Activated CD4-positive, alpha-beta memory T cell treated with anti-CD3 and anti-CD28 coated beads for 36 hours (primary cell): ENCODE measurements at regions of chr5 and their contacts with region 1.

Region 1: DNA sequence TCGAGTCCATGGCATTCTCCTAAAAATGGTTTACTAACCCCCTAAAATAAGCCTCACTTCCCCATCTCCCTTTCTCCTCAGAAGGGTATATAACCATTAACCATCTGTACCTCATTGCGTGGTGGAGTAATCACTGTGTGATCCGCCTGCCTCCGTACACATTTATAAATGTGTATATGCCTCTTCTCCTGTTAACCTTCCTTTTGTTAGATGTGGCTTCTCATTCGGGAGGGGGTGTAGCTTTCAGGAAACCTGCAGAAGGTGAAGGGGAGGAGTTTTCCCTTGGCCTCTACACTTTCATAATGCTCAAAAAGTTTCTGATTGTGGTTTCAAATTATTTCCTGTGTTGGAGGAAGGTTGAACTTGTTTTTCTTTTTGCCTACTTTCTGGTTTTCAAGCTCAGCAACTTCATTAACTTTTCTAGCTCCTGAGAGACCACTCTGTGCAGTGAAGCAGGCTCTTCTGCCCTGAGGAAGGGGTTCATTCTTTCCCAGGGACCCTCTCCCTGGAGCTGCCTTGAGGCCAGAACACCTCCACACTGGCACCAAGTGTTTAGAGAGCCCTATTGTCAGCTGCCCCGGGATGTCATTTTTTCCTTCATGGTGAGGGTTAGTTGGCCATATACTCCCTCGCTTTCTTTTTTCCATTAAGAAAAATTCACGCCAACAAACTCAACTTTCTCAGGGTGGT is 46.9 kb downstream of the RASGRF2 start:
- DNase-seq: peak; percentile 66
- H3K4me3 Mint-ChIP-seq: peak overlapping the region; percentile 76
- H3K27ac Mint-ChIP-seq: peak overlapping the region; percentile 96
- H3K4me1 Mint-ChIP-seq: peaks cover 69% of the 10 kb centered on the region
- H3K27me3 Mint-ChIP-seq: no peaks in the 10 kb centered on the region

Region 2: DNA sequence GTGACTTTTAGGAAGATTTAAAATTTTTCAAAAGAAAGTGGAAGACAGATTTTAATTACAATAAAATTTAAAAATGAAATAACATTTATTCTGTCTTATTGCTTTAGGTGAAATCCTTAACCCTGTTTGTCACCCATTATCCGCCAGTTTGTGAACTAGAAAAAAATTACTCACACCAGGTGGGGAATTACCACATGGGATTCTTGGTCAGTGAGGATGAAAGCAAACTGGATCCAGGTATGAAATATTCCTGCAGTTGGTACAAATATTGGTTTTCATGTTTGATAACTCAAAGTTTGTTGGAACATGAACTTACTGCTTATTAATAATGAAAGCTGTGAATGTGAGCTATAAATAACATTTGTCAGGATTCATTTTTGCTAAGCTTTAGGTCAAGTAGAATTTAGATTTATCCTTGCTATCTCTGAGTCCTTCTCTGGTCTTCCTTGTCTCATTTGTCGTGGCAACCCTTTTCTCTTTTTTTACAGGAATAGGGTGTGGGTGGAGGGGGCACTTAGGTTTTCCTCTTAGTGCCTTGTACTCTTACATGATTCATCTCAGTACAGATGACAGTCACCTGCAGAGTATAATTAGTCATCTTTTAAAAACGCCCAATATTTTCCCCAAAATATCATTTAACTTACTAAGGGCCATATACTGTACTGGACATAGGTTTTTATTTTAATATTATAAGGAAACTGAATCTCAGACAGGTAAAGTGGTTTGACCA is 142.2 kb before region 1 on chr5:
- CTCF ChIA-PET with region 1: no interaction called
- POLR2A ChIA-PET with region 1: no interaction called
- intact Hi-C with region 1: loop called (anchors 5 kb)
- DNase-seq: peak; percentile 41
- H3K4me3 Mint-ChIP-seq: no peak overlapping the region
- H3K27ac Mint-ChIP-seq: no peak overlapping the region
- H3K4me1 Mint-ChIP-seq: peaks cover 48% of the 10 kb centered on the region
- H3K27me3 Mint-ChIP-seq: no peaks in the 10 kb centered on the region

Region 3: DNA sequence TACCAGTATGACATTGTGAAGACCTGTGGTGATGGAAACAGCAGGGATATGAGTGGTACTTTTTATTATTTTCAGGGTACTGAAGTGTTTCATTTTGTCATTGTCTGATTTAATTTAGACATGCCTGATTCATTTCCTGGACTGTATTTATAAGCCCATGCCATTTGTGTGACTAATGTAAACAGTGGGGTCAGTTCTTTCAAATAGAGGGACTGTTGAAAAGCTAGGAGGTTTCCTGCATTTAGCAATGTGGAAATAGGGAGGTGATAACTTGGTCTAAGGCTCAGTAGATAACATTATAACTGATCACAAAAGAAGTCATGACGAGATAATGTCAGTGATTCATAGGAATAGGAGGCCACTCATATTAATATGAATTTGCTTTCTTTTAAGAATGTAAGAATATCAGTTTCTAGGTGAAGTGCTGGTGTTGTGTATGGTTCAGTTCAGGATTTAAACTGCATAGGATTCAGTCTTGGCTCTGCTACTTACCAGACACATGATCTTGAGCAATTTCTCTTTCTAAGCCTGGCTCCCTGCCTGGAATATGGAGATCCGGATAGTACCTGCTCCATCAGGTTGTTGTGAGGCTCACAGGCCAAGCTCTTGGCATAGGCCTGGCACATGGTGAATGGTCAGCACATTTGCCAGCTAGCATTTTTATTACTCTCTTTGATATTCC is 39.5 kb before region 1 on chr5:
- CTCF ChIA-PET with region 1: interaction called, 4 read pairs
- POLR2A ChIA-PET with region 1: interaction called, 10 read pairs
- intact Hi-C with region 1: loop called (anchors 1 kb)
- DNase-seq: no peak
- H3K4me3 Mint-ChIP-seq: no peak overlapping the region
- H3K27ac Mint-ChIP-seq: peak overlapping the region; percentile 9
- H3K4me1 Mint-ChIP-seq: peaks cover 61% of the 10 kb centered on the region
- H3K27me3 Mint-ChIP-seq: no peaks in the 10 kb centered on the region

Region 4: DNA sequence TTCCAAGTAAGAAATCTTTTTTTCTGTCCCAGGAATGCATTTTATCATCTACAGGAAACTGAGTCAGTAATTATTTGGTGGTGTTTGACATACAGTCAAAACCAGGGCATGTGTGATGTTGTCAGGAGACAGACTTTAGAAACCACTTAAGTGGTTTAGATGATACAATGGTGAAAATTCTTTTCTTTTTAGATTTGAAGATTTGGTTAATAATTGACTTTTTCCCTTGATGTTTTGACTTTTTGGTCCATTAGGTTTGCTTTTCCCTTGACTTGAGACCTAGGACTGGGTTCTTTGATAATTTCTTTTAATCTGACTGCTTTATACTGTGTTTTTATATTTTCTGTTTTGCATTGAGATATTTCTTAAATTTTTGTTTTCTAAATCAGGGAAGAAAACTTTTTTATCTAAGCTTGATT is 38.3 kb after region 1 on chr5:
- CTCF ChIA-PET with region 1: no interaction called
- POLR2A ChIA-PET with region 1: no interaction called
- intact Hi-C with region 1: no loop called
- DNase-seq: no peak
- H3K4me3 Mint-ChIP-seq: no peak overlapping the region
- H3K27ac Mint-ChIP-seq: no peak overlapping the region
- H3K4me1 Mint-ChIP-seq: peaks cover 19% of the 10 kb centered on the region
- H3K27me3 Mint-ChIP-seq: no peaks in the 10 kb centered on the region

Region 5: DNA sequence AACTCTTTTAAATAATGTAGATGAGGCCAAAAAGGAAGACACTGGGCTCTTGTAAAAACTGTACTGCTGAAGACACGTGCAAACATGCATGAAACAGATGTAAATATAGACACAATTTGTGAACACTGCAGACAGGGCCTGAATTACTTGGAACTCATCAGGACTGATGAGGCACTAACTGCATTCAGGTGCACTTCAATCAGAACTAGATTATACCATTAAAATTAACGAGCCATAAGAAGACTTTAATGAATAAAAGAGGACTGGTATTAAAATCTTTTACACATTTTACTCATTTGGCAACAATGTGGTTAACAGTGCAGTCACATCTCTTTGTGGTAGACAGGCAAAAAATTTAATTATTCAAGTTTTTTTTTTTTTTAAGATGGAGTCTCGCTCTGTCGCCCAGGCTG is 280.9 kb after region 1 on chr5:
- CTCF ChIA-PET with region 1: interaction called, 3 read pairs
- POLR2A ChIA-PET with region 1: no interaction called
- intact Hi-C with region 1: loop called (anchors 2 kb)
- DNase-seq: no peak
- H3K4me3 Mint-ChIP-seq: no peak overlapping the region
- H3K27ac Mint-ChIP-seq: no peak overlapping the region
- H3K4me1 Mint-ChIP-seq: peaks cover 54% of the 10 kb centered on the region
- H3K27me3 Mint-ChIP-seq: no peaks in the 10 kb centered on the region